Activated T-helper 2 cell treated with anti-CD3 and anti-CD28 coated beads, Interferon-gamma antibody, Interleukin-2, Interleukin-4, amounts not matched to agents 10 μg/mL and 5 μg/mL and 100 μg/mL, durations not matched to agents 14 hours and 24 hours and 36 hours (primary cell): ENCODE measurements at regions of chr9 and their contacts with region 1.

Region 1: GRCh38 chr9:123322273-123323195 is 33.5 kb upstream of the CRB2 start:
- DNase-seq: peak; percentile 57
- H3K4me3 Mint-ChIP-seq: peak overlapping the region; percentile 24
- H3K27ac Mint-ChIP-seq: peak overlapping the region; percentile 87
- H3K4me1 Mint-ChIP-seq: peaks cover 55% of the 10 kb centered on the region
- H3K27me3 Mint-ChIP-seq: no peaks in the 10 kb centered on the region

Region 2: DNA sequence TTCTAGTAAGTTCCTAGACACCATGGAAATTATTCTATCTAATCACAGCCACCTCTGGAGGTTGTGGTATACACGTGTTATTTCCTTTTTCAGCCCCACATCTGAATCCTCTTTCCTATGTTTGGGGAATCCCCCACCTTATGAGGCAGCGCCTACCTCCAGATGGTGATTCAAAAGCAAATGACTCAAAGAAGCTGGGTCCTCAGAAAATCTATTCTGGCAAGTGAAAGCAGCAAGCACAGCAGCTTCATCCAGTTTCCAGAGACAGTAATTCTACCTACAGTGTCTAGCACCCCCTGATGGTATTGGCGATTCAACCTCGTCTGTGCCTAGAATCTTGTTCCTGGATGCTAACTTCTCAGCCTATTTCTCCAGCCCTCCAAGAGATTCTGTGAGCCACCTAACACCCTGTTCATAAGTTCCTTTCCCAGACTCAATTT is 97.1 kb before region 1 on chr9:
- intact Hi-C with region 1: loop called (anchors 5 kb)
- DNase-seq: peak; percentile 27
- H3K4me3 Mint-ChIP-seq: no peak overlapping the region
- H3K27ac Mint-ChIP-seq: peak overlapping the region; percentile 69
- H3K4me1 Mint-ChIP-seq: peaks cover 29% of the 10 kb centered on the region
- H3K27me3 Mint-ChIP-seq: no peaks in the 10 kb centered on the region

Region 3: DNA sequence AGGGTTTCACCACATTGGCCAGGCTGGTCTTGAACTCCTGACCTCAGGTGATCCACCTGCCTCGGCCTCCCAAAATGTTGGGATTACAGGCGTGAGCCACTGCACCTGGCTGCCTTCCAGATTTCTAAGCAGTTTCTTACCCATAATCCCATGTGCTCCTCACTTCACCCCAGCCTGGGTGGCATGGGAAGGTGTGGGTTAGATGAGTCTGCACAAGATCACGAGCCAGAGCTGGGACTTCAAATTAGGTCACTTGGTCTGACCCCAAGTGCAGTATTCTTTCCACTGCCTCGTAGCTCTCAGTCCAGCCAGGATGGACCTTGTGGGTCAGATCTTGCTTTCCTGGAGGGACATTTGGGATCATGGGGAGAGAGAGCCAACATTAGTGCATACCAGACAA is 16.7 kb before region 1 on chr9:
- intact Hi-C with region 1: loop called (anchors 2 kb)
- DNase-seq: no peak
- H3K4me3 Mint-ChIP-seq: no peak overlapping the region
- H3K27ac Mint-ChIP-seq: no peak overlapping the region
- H3K4me1 Mint-ChIP-seq: peaks cover 26% of the 10 kb centered on the region
- H3K27me3 Mint-ChIP-seq: peaks cover 4% of the 10 kb centered on the region